Heart left ventricle (tissue), 16 donors: ENCODE measurements at regions of chr15 and their contacts with region 1.

Region 1: GRCh38 chr15:57923306-57923705 is 142.2 kb downstream of the ALDH1A2 start:
- DNase-seq: peak in 2 of 5 donors; percentile 48 to 69
- ATAC-seq: peak; percentile 78 to 86 (median 82)
- H3K4me3 ChIP-seq: peak overlapping the region in 3 of 12 donors; percentile 0 to 14 (median 5)
- H3K27ac ChIP-seq: peak overlapping the region; percentile 56 to 86 (median 73)
- H3K4me1 ChIP-seq: peaks cover 3 to 55% (median 42%) of the 10 kb centered on the region in 12 donors
- H3K27me3 ChIP-seq: no peaks in the 10 kb centered on the region
- CTCF ChIP-seq: no peak
- POLR2A ChIP-seq: no peak

Region 2: GRCh38 chr15:58043192-58043903 is 120.0 kb after region 1 on chr15:
- intact Hi-C with region 1: loop called in 1 of 10 experiments (anchors 5 kb)
- DNase-seq: peak in 4 of 5 donors; percentile 28 to 52 (median 36)
- ATAC-seq: peak in 2 of 4 donors; percentile 29 to 53
- H3K4me3 ChIP-seq: no peak overlapping the region
- H3K27ac ChIP-seq: no peak overlapping the region
- H3K4me1 ChIP-seq: peaks cover 0 to 19% (median 4%) of the 10 kb centered on the region in 12 donors
- H3K27me3 ChIP-seq: no peaks in the 10 kb centered on the region
- CTCF ChIP-seq: peak; percentile 31 to 75 (median 55)
- POLR2A ChIP-seq: no peak